Activated T-helper 1 cell treated with anti-CD3 and anti-CD28 coated beads, Interleukin-12 subunit alpha, Interleukin-12 subunit beta, Interleukin-2, Interleukin-4 antibody, amounts not matched to agents 30 ng/mL and 10 ng/mL and 1 ng/mL, durations not matched to agents 14 hours and 24 hours and 36 hours (primary cell): ENCODE measurements at regions of chr12 and their contacts with region 1.

Region 1: GRCh38 chr12:27207615-27208413 is 36.3 kb upstream of the STK38L start:
- DNase-seq: peak; percentile 50
- H3K4me3 Mint-ChIP-seq: no peak overlapping the region
- H3K27ac Mint-ChIP-seq: no peak overlapping the region
- H3K4me1 Mint-ChIP-seq: peaks cover 28% of the 10 kb centered on the region
- H3K27me3 Mint-ChIP-seq: peaks cover 1% of the 10 kb centered on the region

Region 2: GRCh38 chr12:27185234-27186021 is 22.4 kb before region 1 on chr12:
- intact Hi-C with region 1: loop called (anchors 1 kb)
- DNase-seq: peak; percentile 58
- H3K4me3 Mint-ChIP-seq: peak overlapping the region; percentile 1
- H3K27ac Mint-ChIP-seq: peak overlapping the region; percentile 61
- H3K4me1 Mint-ChIP-seq: peaks cover 40% of the 10 kb centered on the region
- H3K27me3 Mint-ChIP-seq: no peaks in the 10 kb centered on the region

Region 3: GRCh38 chr12:27237790-27238771 is 30.3 kb after region 1 on chr12:
- intact Hi-C with region 1: loop called (anchors 1 kb)
- DNase-seq: peak; percentile 19
- H3K4me3 Mint-ChIP-seq: peak overlapping the region; percentile 67
- H3K27ac Mint-ChIP-seq: peak overlapping the region; percentile 68
- H3K4me1 Mint-ChIP-seq: peaks cover 41% of the 10 kb centered on the region
- H3K27me3 Mint-ChIP-seq: peaks cover 2% of the 10 kb centered on the region

Region 4: DNA sequence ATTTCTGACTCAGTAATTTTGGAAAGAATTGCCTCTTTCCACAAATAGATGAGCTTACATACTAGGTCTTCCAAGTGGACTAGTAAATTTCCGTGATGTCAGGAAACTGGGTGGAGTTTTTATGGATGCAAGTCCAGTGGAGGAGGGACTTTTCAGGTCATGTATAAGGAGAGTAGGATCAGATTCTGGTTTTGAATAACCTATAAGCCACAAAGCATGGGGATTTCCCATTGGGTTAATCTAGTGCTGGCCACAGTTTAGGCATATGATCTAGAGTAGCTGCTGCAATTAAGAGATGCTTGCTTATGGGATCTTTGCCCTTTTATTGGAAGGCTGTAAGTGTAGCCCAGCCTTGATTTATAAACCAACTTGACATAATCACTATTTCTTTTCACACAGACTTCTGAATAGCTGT is 70.0 kb after region 1 on chr12:
- intact Hi-C with region 1: loop called (anchors 2 kb)
- DNase-seq: peak; percentile 13
- H3K4me3 Mint-ChIP-seq: no peak overlapping the region
- H3K27ac Mint-ChIP-seq: peak overlapping the region; percentile 13
- H3K4me1 Mint-ChIP-seq: peaks cover 23% of the 10 kb centered on the region
- H3K27me3 Mint-ChIP-seq: no peaks in the 10 kb centered on the region